Dendritic cell treated with granulocyte-macrophage colony-stimulating factor and Interleukin-4, amounts not matched to agents 40 ng/mL and 50 ng/mL, for 4 days (primary cell): ENCODE measurements at regions of chr1 and their contacts with region 1.

Region 1: DNA sequence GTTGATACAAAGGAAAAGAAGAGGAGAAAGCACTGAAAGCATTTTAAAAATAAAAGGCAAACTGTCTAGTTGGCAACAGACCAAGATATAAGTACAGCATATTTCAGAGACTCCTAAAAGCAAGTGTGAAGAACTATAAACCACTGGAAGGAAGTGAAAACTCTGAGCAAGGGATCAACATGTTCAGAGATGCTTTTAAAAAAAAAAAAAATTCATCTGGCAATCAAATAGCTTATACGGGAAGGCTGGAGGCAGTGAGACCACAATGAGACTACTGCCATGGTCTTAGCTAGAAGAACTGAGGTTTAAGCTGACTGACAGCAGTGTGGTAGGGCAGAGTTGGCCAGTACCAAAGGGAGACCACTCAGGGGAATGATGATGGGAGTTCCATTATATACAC is 124.3 kb downstream of the VAV3 start:
- H3K4me3 Mint-ChIP-seq: peak overlapping the region; percentile 60
- H3K27ac Mint-ChIP-seq: peak overlapping the region; percentile 76
- H3K4me1 Mint-ChIP-seq: peaks cover 81% of the 10 kb centered on the region
- H3K27me3 Mint-ChIP-seq: no peaks in the 10 kb centered on the region

Region 2: GRCh38 chr1:107016376-107016978 is 824.2 kb before region 1 on chr1:
- intact Hi-C with region 1: no loop called
- H3K4me3 Mint-ChIP-seq: no peak overlapping the region
- H3K27ac Mint-ChIP-seq: no peak overlapping the region
- H3K4me1 Mint-ChIP-seq: no peaks in the 10 kb centered on the region
- H3K27me3 Mint-ChIP-seq: no peaks in the 10 kb centered on the region

Region 3: GRCh38 chr1:107787299-107787698 is 53.4 kb before region 1 on chr1:
- intact Hi-C with region 1: no loop called
- H3K4me3 Mint-ChIP-seq: no peak overlapping the region
- H3K27ac Mint-ChIP-seq: peak overlapping the region; percentile 64
- H3K4me1 Mint-ChIP-seq: peaks cover 62% of the 10 kb centered on the region
- H3K27me3 Mint-ChIP-seq: no peaks in the 10 kb centered on the region

Region 4: DNA sequence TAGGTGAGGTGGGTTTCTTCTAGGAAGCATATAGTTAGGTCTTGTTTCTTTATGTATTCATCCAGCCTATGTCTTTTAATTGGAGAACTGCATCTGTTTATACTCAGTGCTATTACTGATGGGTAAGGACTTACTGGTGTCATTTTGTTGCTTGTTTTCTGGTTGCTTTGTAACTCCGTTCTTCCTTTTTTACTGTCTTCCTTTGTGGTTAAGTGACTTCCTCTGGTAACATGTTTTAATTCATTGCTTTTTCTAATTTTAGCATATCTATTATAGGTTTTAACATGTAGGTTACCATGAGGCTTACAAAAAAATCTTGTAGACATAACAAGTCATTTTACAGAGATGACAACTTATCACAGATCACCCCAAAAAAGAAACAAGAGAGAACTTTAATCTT is 36.6 kb before region 1 on chr1:
- intact Hi-C with region 1: loop called (anchors 5 kb)
- H3K4me3 Mint-ChIP-seq: no peak overlapping the region
- H3K27ac Mint-ChIP-seq: peak overlapping the region; percentile 26
- H3K4me1 Mint-ChIP-seq: peaks cover 58% of the 10 kb centered on the region
- H3K27me3 Mint-ChIP-seq: no peaks in the 10 kb centered on the region

Region 5: DNA sequence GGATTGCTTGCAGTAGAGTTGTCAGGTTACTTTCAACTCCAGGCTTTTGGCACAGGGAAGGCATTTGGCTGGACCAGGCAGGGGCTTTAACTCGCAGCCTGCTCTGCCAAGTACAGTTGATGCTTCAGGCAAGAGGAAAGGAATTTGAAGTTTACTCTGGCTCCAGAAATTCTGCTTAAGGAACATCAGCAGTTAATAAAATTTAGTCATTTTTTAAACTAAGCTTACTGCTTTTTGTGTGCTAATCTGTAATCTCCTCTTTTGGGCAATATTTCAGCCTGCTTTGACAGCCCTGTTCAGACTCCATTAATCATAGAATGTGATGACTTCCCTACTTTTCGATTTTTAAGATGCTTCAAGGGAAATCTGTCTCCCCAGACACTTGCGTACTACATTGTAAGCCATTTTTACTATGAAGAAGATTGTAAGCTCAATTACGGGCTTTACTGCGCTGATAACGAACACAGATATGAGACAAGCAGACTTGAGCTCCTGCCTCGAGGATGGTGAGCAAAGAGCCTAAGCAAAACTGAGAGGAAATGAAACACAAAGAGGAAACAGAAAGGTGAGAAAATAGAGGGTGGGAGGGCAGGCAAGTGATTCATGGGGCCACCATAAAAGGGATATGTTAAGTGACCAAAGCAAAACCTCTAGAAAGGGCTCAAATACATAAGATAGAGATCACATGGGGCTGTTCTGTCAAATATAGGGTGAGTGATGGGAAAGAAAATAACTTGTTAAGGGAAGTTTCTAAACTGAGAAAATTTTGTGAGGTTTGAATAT is 200.8 kb after region 1 on chr1:
- intact Hi-C with region 1: no loop called
- H3K4me3 Mint-ChIP-seq: no peak overlapping the region
- H3K27ac Mint-ChIP-seq: peak overlapping the region; percentile 68
- H3K4me1 Mint-ChIP-seq: peaks cover 65% of the 10 kb centered on the region
- H3K27me3 Mint-ChIP-seq: no peaks in the 10 kb centered on the region